ENCODE measurements at regions of chr12 and their contacts with region 1.

Region 1: GRCh38 chr12:47705566-47706425 is at the start of gene RPAP3:
- DNase-seq: peak; percentile 92 to 98 (median 97)
- ATAC-seq: peak; percentile 95
- H3K4me3 ChIP-seq: peak within 1 kb of the TSS; percentile 63 to 73
- H3K4me3 Mint-ChIP-seq: peak within 1 kb of the TSS; percentile 91
- H3K27ac ChIP-seq: peak within 1 kb of the TSS; percentile 67 to 88
- H3K27ac Mint-ChIP-seq: peak within 1 kb of the TSS; percentile 96
- H3K4me1 ChIP-seq: peaks cover 48% of the 10 kb centered on the region
- H3K4me1 Mint-ChIP-seq: peaks cover 64% of the 10 kb centered on the region
- H3K27me3 ChIP-seq: no peaks in the 10 kb centered on the region
- H3K27me3 Mint-ChIP-seq: no peaks in the 10 kb centered on the region
- CTCF ChIP-seq: peak; percentile 77
- total RNA-seq, gene RPAP3: 17.3 to 18.3 TPM

Region 2: DNA sequence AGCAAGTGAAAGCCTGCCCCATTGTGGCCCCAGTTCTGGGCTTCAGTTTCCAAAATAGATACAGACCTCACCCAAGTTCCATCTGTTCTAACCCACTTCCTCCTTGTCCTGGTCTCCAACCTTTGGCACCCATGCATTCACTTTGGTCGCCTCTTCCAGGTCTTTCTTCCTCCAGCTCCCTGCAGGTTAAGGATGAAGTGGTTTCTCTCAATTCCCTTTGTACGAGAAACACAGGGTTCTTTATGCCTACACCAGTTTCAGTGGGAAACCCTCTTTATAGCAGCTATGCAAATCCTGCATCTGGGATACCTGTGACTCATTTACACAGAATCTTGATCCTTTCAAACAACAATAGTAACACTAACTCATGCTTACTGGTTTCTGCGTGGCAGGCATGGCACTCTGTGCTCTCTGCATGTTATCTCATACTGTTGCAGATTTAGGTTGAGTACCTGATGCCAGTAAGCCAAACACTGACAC is 515.5 kb before region 1 on chr12:
- CTCF ChIA-PET with region 1: no interaction called
- POLR2A ChIA-PET with region 1: no interaction called
- intact Hi-C with region 1: loop called in 1 of 2 experiments (anchors 5 kb)
- DNase-seq: peak in 1 of 9 experiments; percentile 25
- ATAC-seq: no peak
- H3K4me3 ChIP-seq: no peak overlapping the region
- H3K4me3 Mint-ChIP-seq: peak overlapping the region; percentile 63
- H3K27ac ChIP-seq: peak overlapping the region in 1 of 2 experiments; percentile 69
- H3K27ac Mint-ChIP-seq: peak overlapping the region; percentile 89
- H3K4me1 ChIP-seq: peaks cover 85% of the 10 kb centered on the region
- H3K4me1 Mint-ChIP-seq: peaks cover 88% of the 10 kb centered on the region
- H3K27me3 ChIP-seq: no peaks in the 10 kb centered on the region
- H3K27me3 Mint-ChIP-seq: no peaks in the 10 kb centered on the region
- CTCF ChIP-seq: no peak

Region 3: GRCh38 chr12:47672068-47672467 is 33.7 kb before region 1 on chr12:
- CTCF ChIA-PET with region 1: no interaction called
- POLR2A ChIA-PET with region 1: no interaction called
- intact Hi-C with region 1: no loop called
- DNase-seq: no peak
- ATAC-seq: no peak
- H3K4me3 ChIP-seq: no peak overlapping the region
- H3K4me3 Mint-ChIP-seq: no peak overlapping the region
- H3K27ac ChIP-seq: no peak overlapping the region
- H3K27ac Mint-ChIP-seq: peak overlapping the region; percentile 11
- H3K4me1 ChIP-seq: no peaks in the 10 kb centered on the region
- H3K4me1 Mint-ChIP-seq: peaks cover 12% of the 10 kb centered on the region
- H3K27me3 ChIP-seq: no peaks in the 10 kb centered on the region
- H3K27me3 Mint-ChIP-seq: no peaks in the 10 kb centered on the region
- CTCF ChIP-seq: no peak

Region 4: DNA sequence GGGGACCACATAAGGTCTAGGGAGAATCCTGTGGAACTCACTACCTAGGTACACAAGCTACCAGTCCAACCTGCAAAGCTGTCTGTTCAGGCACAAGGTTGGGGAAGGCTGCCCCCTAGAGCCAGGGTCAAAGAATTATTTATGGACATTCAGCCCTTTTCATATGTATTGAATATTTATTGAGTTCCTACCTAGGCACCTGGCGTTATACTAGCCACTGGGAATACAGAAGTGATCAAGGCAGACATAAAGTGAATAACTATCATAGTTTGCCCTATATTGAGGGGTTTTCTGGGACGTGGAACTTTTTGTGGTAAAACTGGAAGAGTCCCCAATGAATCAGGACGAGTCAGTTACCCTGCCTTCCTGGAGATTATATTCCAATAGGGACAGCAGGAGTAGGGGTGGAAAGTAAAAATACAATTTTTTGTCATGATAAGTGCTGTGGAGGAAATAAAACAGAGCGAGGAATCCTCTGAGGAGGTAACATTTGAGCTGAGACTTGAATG is 61.5 kb after region 1 on chr12:
- CTCF ChIA-PET with region 1: interaction called, 15 read pairs
- POLR2A ChIA-PET with region 1: interaction called, 5 read pairs
- intact Hi-C with region 1: no loop called
- DNase-seq: peak; percentile 46 to 83 (median 73)
- ATAC-seq: peak; percentile 76
- H3K4me3 ChIP-seq: no peak overlapping the region
- H3K4me3 Mint-ChIP-seq: no peak overlapping the region
- H3K27ac ChIP-seq: no peak overlapping the region
- H3K27ac Mint-ChIP-seq: no peak overlapping the region
- H3K4me1 ChIP-seq: peaks cover 28% of the 10 kb centered on the region
- H3K4me1 Mint-ChIP-seq: peaks cover 23% of the 10 kb centered on the region
- H3K27me3 ChIP-seq: no peaks in the 10 kb centered on the region
- H3K27me3 Mint-ChIP-seq: no peaks in the 10 kb centered on the region
- CTCF ChIP-seq: peak; percentile 58

Region 5: GRCh38 chr12:47963340-47964040 is 257.7 kb after region 1 on chr12 and contains the start of gene TMEM106C:
- CTCF ChIA-PET with region 1: no interaction called
- POLR2A ChIA-PET with region 1: no interaction called
- intact Hi-C with region 1: loop called (anchors 2 to 5 kb)
- DNase-seq: peak; percentile 82 to 96 (median 90)
- ATAC-seq: peak; percentile 98
- H3K4me3 ChIP-seq: peak within 1 kb of the TSS; percentile 67 to 76
- H3K4me3 Mint-ChIP-seq: peak within 1 kb of the TSS; percentile 97
- H3K27ac ChIP-seq: peak within 1 kb of the TSS in 1 of 2 experiments; percentile 43
- H3K27ac Mint-ChIP-seq: peak within 1 kb of the TSS; percentile 83
- H3K4me1 ChIP-seq: peaks cover 13% of the 10 kb centered on the region
- H3K4me1 Mint-ChIP-seq: peaks cover 25% of the 10 kb centered on the region
- H3K27me3 ChIP-seq: no peaks in the 10 kb centered on the region
- H3K27me3 Mint-ChIP-seq: peaks cover 11% of the 10 kb centered on the region
- CTCF ChIP-seq: peak; percentile 93
- total RNA-seq, gene TMEM106C: 12.1 to 13.1 TPM

Region 6: DNA sequence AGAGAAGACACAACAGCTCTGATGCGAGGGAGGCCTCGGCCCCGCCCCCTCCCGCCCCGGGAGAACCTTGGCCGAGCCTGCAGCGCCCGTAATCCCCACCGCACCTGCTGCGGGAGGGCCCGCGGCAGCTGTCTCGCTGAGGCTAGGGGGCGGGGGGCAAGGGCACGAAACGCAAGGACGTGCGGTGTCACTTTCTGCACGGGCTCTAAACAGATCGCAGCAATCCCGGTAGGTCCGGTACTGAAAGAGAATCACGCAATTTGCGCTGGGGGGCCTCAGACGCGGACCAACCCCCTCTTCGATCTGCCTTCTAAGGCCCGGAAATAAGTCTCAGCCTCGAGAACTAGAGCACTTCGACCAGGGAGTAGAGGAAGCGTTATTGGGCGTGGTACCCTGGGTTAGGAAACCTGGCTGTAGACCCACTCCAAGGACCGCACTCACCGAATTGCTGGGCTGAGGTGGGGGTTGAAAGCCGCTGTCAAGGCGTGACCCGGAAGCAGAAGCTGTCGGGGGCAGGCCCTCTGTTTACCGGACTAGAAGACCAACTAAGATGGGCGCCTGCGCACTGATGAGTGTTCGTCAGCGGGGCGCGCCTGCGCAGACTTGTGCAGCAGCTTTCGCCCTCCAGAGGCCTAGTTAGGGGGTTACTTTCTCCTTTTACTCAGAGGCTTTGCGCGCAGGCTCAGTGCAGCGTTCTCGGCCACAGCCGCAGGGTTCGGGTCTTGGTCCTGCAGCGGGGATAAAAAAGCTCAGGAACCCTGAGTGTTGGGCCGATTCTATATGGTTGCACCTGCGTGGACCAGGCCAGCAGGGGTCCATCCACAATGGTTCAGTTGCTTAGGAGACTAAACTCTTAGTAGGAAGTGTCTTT is 451.5 kb after region 1 on chr12 and contains the start of gene ASB8:
- CTCF ChIA-PET with region 1: no interaction called
- POLR2A ChIA-PET with region 1: no interaction called
- intact Hi-C with region 1: loop called in 1 of 2 experiments (anchors 1 kb)
- DNase-seq: peak; percentile 98 to 99 (median 99)
- ATAC-seq: peak; percentile 95
- H3K4me3 ChIP-seq: peak within 1 kb of the TSS; percentile 92 to 97
- H3K4me3 Mint-ChIP-seq: peak within 1 kb of the TSS; percentile 98
- H3K27ac ChIP-seq: peak within 1 kb of the TSS; percentile 83 to 87
- H3K27ac Mint-ChIP-seq: peak within 1 kb of the TSS; percentile 99
- H3K4me1 ChIP-seq: peaks cover 15% of the 10 kb centered on the region
- H3K4me1 Mint-ChIP-seq: peaks cover 48% of the 10 kb centered on the region
- H3K27me3 ChIP-seq: no peaks in the 10 kb centered on the region
- H3K27me3 Mint-ChIP-seq: no peaks in the 10 kb centered on the region
- CTCF ChIP-seq: peak; percentile 63
- total RNA-seq, gene ASB8: 54.7 to 55.6 TPM

Region 7: GRCh38 chr12:48716493-48717251 is 1010.9 kb after region 1 on chr12 and contains the start of gene CCNT1:
- CTCF ChIA-PET with region 1: no interaction called
- POLR2A ChIA-PET with region 1: no interaction called
- intact Hi-C with region 1: loop called in 1 of 2 experiments (anchors 5 kb)
- DNase-seq: peak; percentile 96 to 100 (median 97)
- ATAC-seq: peak; percentile 86
- H3K4me3 ChIP-seq: peak within 1 kb of the TSS; percentile 84
- H3K4me3 Mint-ChIP-seq: peak within 1 kb of the TSS; percentile 92
- H3K27ac ChIP-seq: peak within 1 kb of the TSS; percentile 96 to 99
- H3K27ac Mint-ChIP-seq: peak within 1 kb of the TSS; percentile 98
- H3K4me1 ChIP-seq: peaks cover 30% of the 10 kb centered on the region
- H3K4me1 Mint-ChIP-seq: peaks cover 40% of the 10 kb centered on the region
- H3K27me3 ChIP-seq: no peaks in the 10 kb centered on the region
- H3K27me3 Mint-ChIP-seq: no peaks in the 10 kb centered on the region
- CTCF ChIP-seq: no peak
- total RNA-seq, gene CCNT1: 127 to 132 TPM

Measured in CD8-positive, alpha-beta T cell (primary cell).